Caco-2 (cell line): ENCODE measurements at regions of chr17 and their contacts with region 1.

Region 1: DNA sequence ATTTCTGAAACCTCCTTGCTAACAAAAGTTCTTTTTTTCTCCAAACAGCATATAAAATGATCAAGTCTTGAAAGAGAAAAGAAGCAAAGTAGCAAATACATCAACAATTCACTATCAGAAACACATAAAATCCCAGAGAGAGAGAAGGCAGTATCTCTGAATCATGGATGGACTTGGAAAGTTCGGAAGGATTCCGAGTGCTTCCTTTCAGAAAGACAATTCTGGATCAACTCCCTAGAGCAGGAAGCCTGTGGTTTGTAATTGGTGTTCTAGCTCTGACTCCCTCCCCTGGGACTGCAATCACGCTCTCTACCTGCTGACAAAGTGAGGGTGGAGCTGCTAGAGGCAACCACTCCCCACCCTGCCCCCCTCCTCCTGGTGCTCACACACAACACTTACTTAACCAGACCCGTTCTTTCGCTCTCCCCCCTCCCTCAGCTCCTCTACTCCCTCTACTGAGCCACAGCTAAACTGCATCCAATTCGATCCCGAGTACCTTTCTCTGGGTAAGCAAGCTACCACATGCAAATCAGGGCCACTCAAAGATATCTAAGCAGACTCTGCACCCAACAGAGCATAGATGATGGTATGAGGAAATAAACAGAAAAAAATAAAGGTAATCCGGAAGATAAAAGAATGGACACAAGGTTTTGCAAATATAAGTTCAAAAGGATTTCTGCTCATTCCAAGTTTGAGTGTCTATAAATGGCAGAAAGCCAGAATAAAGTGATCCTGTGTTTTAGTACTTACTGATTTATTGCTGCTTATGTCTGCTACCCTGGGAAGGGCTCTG is at the start of gene RNF43:
- DNase-seq: peak; percentile 98 to 99
- H3K4me3 ChIP-seq: peak within 1 kb of the TSS; percentile 70
- H3K4me3 Mint-ChIP-seq: peak within 1 kb of the TSS; percentile 90
- H3K27ac Mint-ChIP-seq: peak within 1 kb of the TSS; percentile 93
- H3K4me1 ChIP-seq: peaks cover 13% of the 10 kb centered on the region
- H3K4me1 Mint-ChIP-seq: peaks cover 10% of the 10 kb centered on the region
- H3K27me3 ChIP-seq: no peaks in the 10 kb centered on the region
- H3K27me3 Mint-ChIP-seq: no peaks in the 10 kb centered on the region
- CTCF ChIP-seq: peak; percentile 88 to 92
- total RNA-seq, gene RNF43: 84.2 and 87.1 TPM in 2 replicates

Region 2: GRCh38 chr17:58317421-58318064 is 100.0 kb before region 1 on chr17:
- CTCF ChIA-PET with region 1: interaction called, 84 read pairs
- POLR2A ChIA-PET with region 1: interaction called, 11 read pairs
- intact Hi-C with region 1: loop called (anchors 1 kb)
- DNase-seq: peak; percentile 77 to 83
- H3K4me3 ChIP-seq: no peak overlapping the region
- H3K4me3 Mint-ChIP-seq: no peak overlapping the region
- H3K27ac Mint-ChIP-seq: peak overlapping the region; percentile 8
- H3K4me1 ChIP-seq: peaks cover 16% of the 10 kb centered on the region
- H3K4me1 Mint-ChIP-seq: peaks cover 20% of the 10 kb centered on the region
- H3K27me3 ChIP-seq: no peaks in the 10 kb centered on the region
- H3K27me3 Mint-ChIP-seq: no peaks in the 10 kb centered on the region
- CTCF ChIP-seq: peak; percentile 86 to 91

Region 3: GRCh38 chr17:58337600-58338453 is 79.7 kb before region 1 on chr17:
- CTCF ChIA-PET with region 1: interaction called, 15 read pairs
- POLR2A ChIA-PET with region 1: interaction called, 9 read pairs
- intact Hi-C with region 1: no loop called
- DNase-seq: peak; percentile 73 to 78
- H3K4me3 ChIP-seq: no peak overlapping the region
- H3K4me3 Mint-ChIP-seq: no peak overlapping the region
- H3K27ac Mint-ChIP-seq: peak overlapping the region; percentile 74
- H3K4me1 ChIP-seq: peaks cover 34% of the 10 kb centered on the region
- H3K4me1 Mint-ChIP-seq: peaks cover 15% of the 10 kb centered on the region
- H3K27me3 ChIP-seq: no peaks in the 10 kb centered on the region
- H3K27me3 Mint-ChIP-seq: no peaks in the 10 kb centered on the region
- CTCF ChIP-seq: no peak

Region 4: GRCh38 chr17:58364270-58364942 is 53.1 kb before region 1 on chr17:
- CTCF ChIA-PET with region 1: interaction called, 34 read pairs
- POLR2A ChIA-PET with region 1: interaction called, 28 read pairs
- intact Hi-C with region 1: loop called (anchors 1 kb)
- DNase-seq: peak; percentile 84 to 92
- H3K4me3 ChIP-seq: no peak overlapping the region
- H3K4me3 Mint-ChIP-seq: peak overlapping the region; percentile 43
- H3K27ac Mint-ChIP-seq: peak overlapping the region; percentile 67
- H3K4me1 ChIP-seq: peaks cover 61% of the 10 kb centered on the region
- H3K4me1 Mint-ChIP-seq: peaks cover 63% of the 10 kb centered on the region
- H3K27me3 ChIP-seq: no peaks in the 10 kb centered on the region
- H3K27me3 Mint-ChIP-seq: no peaks in the 10 kb centered on the region
- CTCF ChIP-seq: no peak

Region 5: GRCh38 chr17:58382108-58382871 is 35.2 kb before region 1 on chr17:
- CTCF ChIA-PET with region 1: interaction called, 11 read pairs
- POLR2A ChIA-PET with region 1: interaction called, 14 read pairs
- intact Hi-C with region 1: loop called (anchors 5 kb)
- DNase-seq: no peak
- H3K4me3 ChIP-seq: no peak overlapping the region
- H3K4me3 Mint-ChIP-seq: peak overlapping the region; percentile 10
- H3K27ac Mint-ChIP-seq: peak overlapping the region; percentile 59
- H3K4me1 ChIP-seq: peaks cover 98% of the 10 kb centered on the region
- H3K4me1 Mint-ChIP-seq: peaks cover 67% of the 10 kb centered on the region
- H3K27me3 ChIP-seq: no peaks in the 10 kb centered on the region
- H3K27me3 Mint-ChIP-seq: no peaks in the 10 kb centered on the region
- CTCF ChIP-seq: no peak

Region 6: GRCh38 chr17:58398574-58399266 is 18.8 kb before region 1 on chr17:
- CTCF ChIA-PET with region 1: interaction called, 12 read pairs
- POLR2A ChIA-PET with region 1: interaction called, 4 read pairs
- intact Hi-C with region 1: loop called (anchors 1 kb)
- DNase-seq: no peak
- H3K4me3 ChIP-seq: no peak overlapping the region
- H3K4me3 Mint-ChIP-seq: no peak overlapping the region
- H3K27ac Mint-ChIP-seq: peak overlapping the region; percentile 75
- H3K4me1 ChIP-seq: peaks cover 99% of the 10 kb centered on the region
- H3K4me1 Mint-ChIP-seq: peaks cover 82% of the 10 kb centered on the region
- H3K27me3 ChIP-seq: no peaks in the 10 kb centered on the region
- H3K27me3 Mint-ChIP-seq: no peaks in the 10 kb centered on the region
- CTCF ChIP-seq: no peak

Region 7: DNA sequence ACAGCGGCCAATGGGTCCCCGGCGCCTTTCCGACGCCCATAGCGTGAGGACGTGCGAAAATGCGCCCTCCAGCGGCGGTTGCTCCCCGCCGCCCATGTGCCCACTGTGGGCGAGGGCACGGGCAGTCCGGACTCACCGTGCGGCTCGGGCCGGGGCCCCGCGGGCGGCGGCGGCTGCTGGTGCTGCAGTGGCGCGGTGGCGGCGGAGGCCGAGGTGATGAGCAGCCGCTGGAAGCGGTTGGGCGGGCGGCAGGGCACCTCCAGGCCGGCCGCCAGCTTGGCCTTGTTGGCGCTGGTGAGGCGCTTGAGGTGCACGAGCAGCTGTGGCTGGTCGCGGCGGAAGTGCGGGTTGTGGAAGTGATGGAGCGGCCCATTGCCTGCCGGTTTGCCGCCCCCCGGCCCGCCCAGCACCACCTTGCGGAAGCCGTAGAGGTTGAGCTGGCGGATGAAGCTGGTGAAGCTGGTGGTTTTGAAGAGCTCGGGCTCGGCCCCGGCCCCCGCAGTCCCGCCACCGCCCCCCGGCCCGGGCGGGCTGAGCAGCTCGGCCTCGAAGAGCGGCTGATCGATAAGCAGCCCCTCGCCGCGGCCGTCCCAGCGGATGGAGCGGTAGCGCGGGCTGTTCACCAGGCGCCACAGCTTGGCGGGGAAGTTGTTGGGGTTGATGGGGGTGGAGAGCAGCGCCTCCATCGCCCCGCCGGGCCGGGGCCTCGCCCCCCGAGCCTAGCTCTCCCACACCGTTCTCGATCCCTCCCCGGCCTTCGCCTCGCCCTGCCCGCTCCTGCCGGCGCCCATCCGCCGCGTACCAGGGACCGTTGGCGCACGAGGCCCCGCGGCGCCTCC is 70.3 kb after region 1 on chr17 and contains the start of gene HSF5:
- CTCF ChIA-PET with region 1: no interaction called
- POLR2A ChIA-PET with region 1: interaction called, 4 read pairs
- intact Hi-C with region 1: loop called (anchors 2 kb)
- DNase-seq: no peak
- H3K4me3 ChIP-seq: no peak within 1 kb of the TSS
- H3K4me3 Mint-ChIP-seq: peak within 1 kb of the TSS; percentile 52
- H3K27ac Mint-ChIP-seq: peak within 1 kb of the TSS; percentile 76
- H3K4me1 ChIP-seq: peaks cover 67% of the 10 kb centered on the region
- H3K4me1 Mint-ChIP-seq: peaks cover 44% of the 10 kb centered on the region
- H3K27me3 ChIP-seq: no peaks in the 10 kb centered on the region
- H3K27me3 Mint-ChIP-seq: no peaks in the 10 kb centered on the region
- CTCF ChIP-seq: no peak
- total RNA-seq, gene HSF5: 0.98 and 1.1 TPM in 2 replicates

Region 8: GRCh38 chr17:58643140-58643539 is 225.6 kb after region 1 on chr17:
- CTCF ChIA-PET with region 1: no interaction called
- POLR2A ChIA-PET with region 1: no interaction called
- intact Hi-C with region 1: no loop called
- DNase-seq: no peak
- H3K4me3 ChIP-seq: no peak overlapping the region
- H3K4me3 Mint-ChIP-seq: no peak overlapping the region
- H3K27ac Mint-ChIP-seq: no peak overlapping the region
- H3K4me1 ChIP-seq: no peaks in the 10 kb centered on the region; the same call in 1 of the 2 replicates
- H3K4me1 Mint-ChIP-seq: no peaks in the 10 kb centered on the region
- H3K27me3 ChIP-seq: no peaks in the 10 kb centered on the region
- H3K27me3 Mint-ChIP-seq: no peaks in the 10 kb centered on the region
- CTCF ChIP-seq: no peak